A673 (cell line): ENCODE measurements at regions of chr14 and their contacts with region 1.

Region 1: GRCh38 chr14:97410667-97411620 is 613.8 kb downstream of the VRK1 start:
- DNase-seq: peak; percentile 84
- H3K4me3 ChIP-seq: peak overlapping the region; percentile 44
- H3K27ac ChIP-seq: peak overlapping the region; percentile 85
- H3K4me1 ChIP-seq: peaks cover 78% of the 10 kb centered on the region
- H3K27me3 ChIP-seq: no peaks in the 10 kb centered on the region
- CTCF ChIP-seq: peak; percentile 63

Region 2: GRCh38 chr14:96754845-96755184 is 656.1 kb before region 1 on chr14:
- CTCF ChIA-PET with region 1: no interaction called
- POLR2A ChIA-PET with region 1: no interaction called
- intact Hi-C with region 1: no loop called
- DNase-seq: peak; percentile 18
- H3K4me3 ChIP-seq: no peak overlapping the region
- H3K27ac ChIP-seq: no peak overlapping the region
- H3K4me1 ChIP-seq: no peaks in the 10 kb centered on the region
- H3K27me3 ChIP-seq: no peaks in the 10 kb centered on the region
- CTCF ChIP-seq: no peak

Region 3: GRCh38 chr14:97233319-97233985 is 177.5 kb before region 1 on chr14:
- CTCF ChIA-PET with region 1: no interaction called
- POLR2A ChIA-PET with region 1: no interaction called
- intact Hi-C with region 1: loop called (anchors 5 kb)
- DNase-seq: peak; percentile 63
- H3K4me3 ChIP-seq: no peak overlapping the region
- H3K27ac ChIP-seq: peak overlapping the region; percentile 93
- H3K4me1 ChIP-seq: peaks cover 58% of the 10 kb centered on the region
- H3K27me3 ChIP-seq: no peaks in the 10 kb centered on the region
- CTCF ChIP-seq: no peak

Region 4: GRCh38 chr14:97458661-97459579 is 48.0 kb after region 1 on chr14:
- CTCF ChIA-PET with region 1: no interaction called
- POLR2A ChIA-PET with region 1: no interaction called
- intact Hi-C with region 1: loop called (anchors 2 kb)
- DNase-seq: peak; percentile 95
- H3K4me3 ChIP-seq: peak overlapping the region; percentile 30
- H3K27ac ChIP-seq: peak overlapping the region; percentile 80
- H3K4me1 ChIP-seq: peaks cover 30% of the 10 kb centered on the region
- H3K27me3 ChIP-seq: no peaks in the 10 kb centered on the region
- CTCF ChIP-seq: no peak; the same call in 1 of the 2 replicates

Region 5: DNA sequence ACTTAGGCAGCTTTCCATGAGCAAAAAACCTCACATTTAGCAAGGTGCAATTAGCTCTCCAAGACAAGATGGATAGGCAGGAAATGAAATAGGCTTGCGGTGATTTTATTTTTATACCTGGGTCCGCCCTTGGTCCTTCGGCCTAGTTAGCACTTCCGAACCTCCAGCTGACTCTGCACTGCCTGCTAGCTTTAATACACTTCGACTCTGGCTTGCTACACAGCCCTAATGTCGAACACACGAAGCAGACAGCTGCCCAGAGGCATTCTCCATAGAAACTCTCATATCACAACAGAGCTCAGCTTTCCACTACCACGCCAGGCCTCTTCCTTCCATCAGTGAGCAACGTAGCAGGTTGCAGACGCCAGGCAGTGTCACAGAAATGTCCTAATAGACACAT is 74.3 kb after region 1 on chr14:
- CTCF ChIA-PET with region 1: no interaction called
- POLR2A ChIA-PET with region 1: no interaction called
- intact Hi-C with region 1: no loop called
- DNase-seq: no peak
- H3K4me3 ChIP-seq: no peak overlapping the region
- H3K27ac ChIP-seq: no peak overlapping the region
- H3K4me1 ChIP-seq: no peaks in the 10 kb centered on the region
- H3K27me3 ChIP-seq: no peaks in the 10 kb centered on the region
- CTCF ChIP-seq: no peak

Region 6: GRCh38 chr14:97978341-97978740 is 567.4 kb after region 1 on chr14:
- CTCF ChIA-PET with region 1: no interaction called
- POLR2A ChIA-PET with region 1: no interaction called
- intact Hi-C with region 1: loop called (anchors 5 kb)
- DNase-seq: peak; percentile 92
- H3K4me3 ChIP-seq: peak overlapping the region; percentile 46
- H3K27ac ChIP-seq: peak overlapping the region; percentile 85
- H3K4me1 ChIP-seq: peaks cover 33% of the 10 kb centered on the region
- H3K27me3 ChIP-seq: no peaks in the 10 kb centered on the region
- CTCF ChIP-seq: peak; percentile 71

Region 7: GRCh38 chr14:98144964-98145363 is 734.0 kb after region 1 on chr14:
- CTCF ChIA-PET with region 1: interaction called, 15 read pairs
- POLR2A ChIA-PET with region 1: no interaction called
- intact Hi-C with region 1: no loop called
- DNase-seq: no peak
- H3K4me3 ChIP-seq: no peak overlapping the region
- H3K27ac ChIP-seq: no peak overlapping the region
- H3K4me1 ChIP-seq: no peaks in the 10 kb centered on the region
- H3K27me3 ChIP-seq: no peaks in the 10 kb centered on the region
- CTCF ChIP-seq: no peak

Region 8: GRCh38 chr14:99271951-99272631 is 1861.1 kb after region 1 on chr14 and contains the start of gene BCL11B:
- CTCF ChIA-PET with region 1: interaction called, 5 read pairs
- POLR2A ChIA-PET with region 1: no interaction called
- intact Hi-C with region 1: loop called (anchors 5 kb)
- DNase-seq: peak; percentile 99
- H3K4me3 ChIP-seq: peak within 1 kb of the TSS; percentile 85
- H3K27ac ChIP-seq: peak within 1 kb of the TSS; percentile 93
- H3K4me1 ChIP-seq: peaks cover 38% of the 10 kb centered on the region
- H3K27me3 ChIP-seq: no peaks in the 10 kb centered on the region
- CTCF ChIP-seq: peak; percentile 78
- total RNA-seq, gene BCL11B: 80.6 and 81.3 TPM in 2 replicates